BJ (cell line): ENCODE measurements at regions of chr11 and their contacts with region 1.

Region 1: GRCh38 chr11:58567889-58568512 is 7.7 kb downstream of the LPXN start:
- DNase-seq: no peak
- H3K4me3 ChIP-seq: no peak overlapping the region
- H3K27me3 ChIP-seq: no peaks in the 10 kb centered on the region
- CTCF ChIP-seq: peak; percentile 85

Region 2: GRCh38 chr11:58549644-58550043 is 18.4 kb before region 1 on chr11:
- CTCF ChIA-PET with region 1: interaction called, 25 read pairs
- POLR2A ChIA-PET with region 1: no interaction called
- DNase-seq: no peak
- H3K4me3 ChIP-seq: no peak overlapping the region
- H3K27me3 ChIP-seq: no peaks in the 10 kb centered on the region
- CTCF ChIP-seq: no peak